ENCODE measurements at regions of chr16 and their contacts with region 1.

Region 1: GRCh38 chr16:57084257-57084770 is 8.1 kb upstream of the CPNE2 start:
- DNase-seq: peak; percentile 88
- CTCF ChIP-seq: peak; percentile 95

Region 2: DNA sequence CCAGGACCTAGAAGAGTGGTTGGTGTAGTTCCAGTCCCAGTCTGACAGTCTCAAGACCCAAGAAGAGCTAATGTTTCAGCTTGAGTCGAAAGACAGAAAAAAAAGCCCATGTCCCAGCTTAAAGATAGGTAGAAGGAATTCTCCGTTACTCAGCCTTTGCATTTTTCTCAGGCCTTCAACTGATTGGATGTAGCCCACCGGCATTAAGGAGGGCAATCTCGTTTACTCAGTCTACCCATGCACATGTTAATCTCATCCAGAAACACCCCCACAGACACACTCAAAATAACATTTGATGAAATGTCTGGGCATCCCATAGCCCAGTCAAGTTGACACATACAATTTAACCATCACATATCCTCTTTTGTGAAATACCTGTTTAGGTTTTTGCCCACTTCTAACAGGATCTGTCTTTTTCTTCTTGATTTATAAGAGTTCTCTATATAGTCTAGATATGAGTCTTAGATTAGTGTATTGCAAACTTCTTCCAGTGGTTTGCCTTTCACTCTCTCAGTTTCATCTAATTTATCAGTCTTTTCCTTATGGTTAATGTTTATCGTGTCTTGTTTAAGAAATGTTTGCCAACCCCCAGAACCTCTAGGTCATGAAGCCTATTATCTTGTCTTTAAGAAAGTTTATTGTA is 362.0 kb before region 1 on chr16:
- CTCF ChIA-PET with region 1: no interaction called
- POLR2A ChIA-PET with region 1: no interaction called
- DNase-seq: no peak
- CTCF ChIP-seq: no peak

Region 3: GRCh38 chr16:57051696-57052228 is 32.6 kb before region 1 on chr16:
- CTCF ChIA-PET with region 1: interaction called, 14 read pairs
- POLR2A ChIA-PET with region 1: no interaction called
- DNase-seq: peak; percentile 56
- CTCF ChIP-seq: no peak

Region 4: GRCh38 chr16:57098188-57098841 is 14.0 kb after region 1 on chr16:
- CTCF ChIA-PET with region 1: interaction called, 92 read pairs
- POLR2A ChIA-PET with region 1: no interaction called
- DNase-seq: no peak
- CTCF ChIP-seq: no peak

Region 5: GRCh38 chr16:57128771-57129389 is 44.6 kb after region 1 on chr16:
- CTCF ChIA-PET with region 1: interaction called, 16 read pairs
- POLR2A ChIA-PET with region 1: interaction called, 3 read pairs
- DNase-seq: no peak
- CTCF ChIP-seq: no peak

Region 6: GRCh38 chr16:57167953-57168352 is 83.6 kb after region 1 on chr16:
- CTCF ChIA-PET with region 1: interaction called, 36 read pairs
- POLR2A ChIA-PET with region 1: no interaction called
- DNase-seq: peak; percentile 54
- CTCF ChIP-seq: peak; percentile 62